ENCODE measurements at regions of chr5 and their contacts with region 1.

Region 1: DNA sequence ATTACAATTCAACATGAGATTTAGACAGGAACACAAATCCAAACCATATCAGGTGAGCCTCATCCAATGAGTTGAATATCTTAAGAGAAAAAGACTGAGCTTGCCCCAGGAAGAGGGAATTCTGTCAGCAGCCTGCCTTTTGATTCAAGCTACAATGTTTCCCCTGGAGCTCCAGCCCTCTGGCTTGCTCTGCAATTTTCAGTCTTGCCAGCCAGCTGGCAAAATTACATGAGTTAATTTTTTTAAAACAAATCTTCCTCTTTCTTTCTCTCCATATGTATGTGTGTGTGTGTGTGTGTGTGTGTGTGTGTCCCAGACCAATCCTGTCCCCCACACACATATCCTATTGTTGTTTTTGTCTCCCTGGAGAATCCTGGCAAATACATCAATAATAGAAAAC is 313.2 kb downstream of the CDH10 start:
- DNase-seq: no peak
- ATAC-seq: no peak
- H3K4me3 ChIP-seq: no peak overlapping the region
- H3K27ac ChIP-seq: no peak overlapping the region
- H3K4me1 ChIP-seq: no peaks in the 10 kb centered on the region
- H3K27me3 ChIP-seq: no peaks in the 10 kb centered on the region
- CTCF ChIP-seq: no peak
- POLR2A ChIP-seq: no peak
- RAD21 ChIP-seq: no peak

Region 2: DNA sequence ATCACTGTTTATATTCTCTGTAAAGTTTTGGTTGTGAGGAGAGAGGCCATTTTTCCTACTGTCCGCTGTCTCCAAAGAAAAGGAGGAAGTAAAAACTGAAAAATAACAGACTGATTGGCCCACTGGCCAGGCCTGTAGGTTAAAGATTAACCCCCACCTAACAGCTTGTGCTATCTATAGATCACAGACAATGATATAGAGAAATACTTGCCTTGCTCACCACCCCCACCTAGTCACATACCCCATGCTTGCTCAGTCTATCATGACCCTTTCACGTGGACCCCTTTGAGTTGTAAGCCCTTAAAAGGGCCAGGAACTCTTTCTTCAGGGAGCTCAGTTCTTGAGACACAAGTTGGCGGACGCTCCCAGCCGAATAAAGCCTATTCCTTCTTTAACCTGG is 466.7 kb before region 1 on chr5:
- CTCF ChIA-PET with region 1: no interaction called
- POLR2A ChIA-PET with region 1: no interaction called
- dilution Hi-C with region 1: no loop called
- in situ Hi-C with region 1: no loop called
- intact Hi-C with region 1: no loop called
- DNase-seq: no peak
- ATAC-seq: no peak
- H3K4me3 ChIP-seq: no peak overlapping the region
- H3K27ac ChIP-seq: no peak overlapping the region
- H3K4me1 ChIP-seq: no peaks in the 10 kb centered on the region
- H3K27me3 ChIP-seq: no peaks in the 10 kb centered on the region
- CTCF ChIP-seq: no peak
- POLR2A ChIP-seq: no peak
- RAD21 ChIP-seq: no peak

Region 3: GRCh38 chr5:24347158-24347557 is 15.6 kb after region 1 on chr5:
- CTCF ChIA-PET with region 1: no interaction called
- POLR2A ChIA-PET with region 1: no interaction called
- dilution Hi-C with region 1: no loop called
- in situ Hi-C with region 1: no loop called
- intact Hi-C with region 1: loop called (anchors 1 kb)
- DNase-seq: no peak
- ATAC-seq: no peak
- H3K4me3 ChIP-seq: no peak overlapping the region
- H3K27ac ChIP-seq: no peak overlapping the region
- H3K4me1 ChIP-seq: no peaks in the 10 kb centered on the region
- H3K27me3 ChIP-seq: no peaks in the 10 kb centered on the region
- CTCF ChIP-seq: no peak
- POLR2A ChIP-seq: no peak
- RAD21 ChIP-seq: no peak

Region 4: DNA sequence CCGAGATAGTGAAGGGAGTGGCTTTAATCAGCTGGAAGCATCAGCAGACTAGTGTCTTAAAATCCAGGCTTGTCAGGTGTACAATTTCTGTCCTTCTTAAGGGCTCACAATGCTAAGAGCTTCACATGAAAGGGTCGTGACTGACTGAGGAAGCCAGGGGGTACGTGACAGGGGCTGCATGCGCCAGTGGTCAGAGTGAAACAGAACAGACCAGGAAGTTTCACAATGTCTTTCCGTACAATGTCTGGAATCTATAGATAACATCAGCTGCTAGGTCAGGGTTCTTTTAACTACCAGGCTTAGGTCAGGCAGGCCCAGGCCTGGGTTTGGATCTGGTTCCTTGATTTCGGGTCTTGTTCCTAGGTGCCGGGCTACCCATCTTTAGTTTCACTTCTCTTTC is 60.3 kb after region 1 on chr5:
- CTCF ChIA-PET with region 1: no interaction called
- POLR2A ChIA-PET with region 1: no interaction called
- dilution Hi-C with region 1: no loop called
- in situ Hi-C with region 1: no loop called
- intact Hi-C with region 1: no loop called
- DNase-seq: no peak
- ATAC-seq: no peak
- H3K4me3 ChIP-seq: no peak overlapping the region
- H3K27ac ChIP-seq: no peak overlapping the region
- H3K4me1 ChIP-seq: no peaks in the 10 kb centered on the region
- H3K27me3 ChIP-seq: no peaks in the 10 kb centered on the region
- CTCF ChIP-seq: no peak
- POLR2A ChIP-seq: no peak
- RAD21 ChIP-seq: no peak